AG04449 (cell line): ENCODE measurements at regions of chr14 and their contacts with region 1.

Region 1: DNA sequence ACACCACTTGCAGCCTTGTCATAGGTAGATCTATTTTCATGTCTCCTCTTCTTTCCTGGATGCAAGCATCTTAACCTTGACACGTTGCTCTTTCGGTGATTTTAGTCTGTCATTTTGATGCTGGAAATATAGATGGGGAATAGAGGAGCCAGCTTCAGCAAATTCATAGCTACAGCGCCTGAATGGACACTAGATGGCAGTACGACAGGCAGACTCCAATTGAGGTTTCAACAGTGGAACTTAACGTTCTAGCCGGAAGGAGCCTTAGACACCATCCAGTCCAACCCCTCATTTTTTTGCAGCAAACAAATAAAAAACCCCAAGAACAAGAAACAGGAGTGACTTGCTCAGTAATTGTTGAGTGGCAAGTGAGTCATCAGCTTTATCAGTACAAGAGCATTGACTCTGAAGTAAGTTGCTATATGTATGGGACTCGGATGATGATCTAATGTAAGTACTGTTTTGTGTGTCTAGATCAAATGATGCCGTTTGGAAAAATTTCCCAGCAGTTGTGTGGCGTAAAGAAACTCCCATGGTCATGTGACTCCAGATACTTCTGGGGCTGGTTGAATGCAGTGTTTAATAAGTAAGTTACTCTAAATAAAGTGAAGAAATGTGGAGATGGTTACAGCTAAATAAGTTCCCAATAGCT is 9.0 kb downstream of the DMAC2L start:
- DNase-seq: peak; percentile 82
- H3K4me3 ChIP-seq: peak overlapping the region; percentile 39
- CTCF ChIP-seq: peak; percentile 85

Region 2: DNA sequence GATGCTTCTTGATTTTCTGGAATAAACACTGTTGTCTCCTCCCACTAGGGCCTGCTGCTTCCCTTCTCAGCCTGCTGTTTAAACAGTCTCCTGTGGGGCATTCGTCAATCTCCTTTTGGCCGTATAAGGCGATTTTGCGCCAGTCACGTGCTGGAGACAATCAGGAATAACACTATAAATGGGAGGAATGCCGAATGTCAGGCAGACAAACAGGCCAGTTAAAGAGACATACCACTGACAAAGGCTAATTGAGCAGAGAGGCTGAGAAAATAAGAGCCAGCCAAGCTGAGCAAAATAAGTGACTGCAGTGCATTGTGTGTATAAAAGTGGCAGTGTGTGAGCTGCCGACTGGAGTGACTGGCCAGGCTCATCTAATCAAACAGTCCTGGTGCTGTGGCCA is 14.3 kb after region 1 on chr14:
- CTCF ChIA-PET with region 1: interaction called, 66 read pairs
- POLR2A ChIA-PET with region 1: no interaction called
- DNase-seq: no peak
- H3K4me3 ChIP-seq: no peak overlapping the region
- CTCF ChIP-seq: no peak

Region 3: DNA sequence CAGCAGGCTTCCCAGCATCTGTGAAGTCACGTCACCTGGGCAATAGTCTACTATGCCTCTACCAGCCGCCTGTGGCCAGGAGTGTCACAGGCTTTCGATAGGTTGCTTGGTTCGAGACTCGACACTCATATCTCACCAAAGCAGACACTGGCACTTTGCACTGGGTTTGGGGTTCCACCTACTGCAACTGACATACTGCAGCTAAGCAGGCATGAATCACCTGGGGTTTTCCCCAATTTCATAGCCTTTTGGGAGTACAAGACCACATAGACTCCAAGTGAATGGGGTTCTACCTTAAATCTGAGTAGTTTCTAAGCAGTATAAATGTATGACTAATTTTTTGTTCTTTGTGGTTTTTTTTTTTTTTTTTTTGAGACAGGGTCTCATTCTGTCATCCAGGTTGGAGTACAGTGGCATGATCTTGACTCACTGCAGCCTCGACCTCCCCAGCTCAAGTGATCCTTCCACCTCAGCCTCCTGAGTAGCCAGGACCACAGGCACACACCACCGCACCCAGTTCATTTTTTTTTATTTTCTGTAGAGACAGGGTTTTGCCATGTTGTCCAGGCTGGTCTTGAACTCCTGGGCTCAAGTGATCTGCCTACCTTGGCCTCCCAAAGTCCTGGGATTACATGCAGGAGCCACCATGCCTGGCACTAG is 23.1 kb after region 1 on chr14:
- CTCF ChIA-PET with region 1: interaction called, 15 read pairs
- POLR2A ChIA-PET with region 1: interaction called, 4 read pairs
- DNase-seq: no peak
- H3K4me3 ChIP-seq: no peak overlapping the region
- CTCF ChIP-seq: no peak

Region 4: GRCh38 chr14:50425816-50426215 is 104.7 kb after region 1 on chr14:
- CTCF ChIA-PET with region 1: interaction called, 10 read pairs
- POLR2A ChIA-PET with region 1: no interaction called
- DNase-seq: peak; percentile 49
- H3K4me3 ChIP-seq: no peak overlapping the region
- CTCF ChIP-seq: no peak

Region 5: GRCh38 chr14:50432131-50432530 is 111.0 kb after region 1 on chr14:
- CTCF ChIA-PET with region 1: interaction called, 10 read pairs
- POLR2A ChIA-PET with region 1: no interaction called
- DNase-seq: no peak
- H3K4me3 ChIP-seq: no peak overlapping the region
- CTCF ChIP-seq: no peak

Region 6: GRCh38 chr14:50532502-50533240 is 211.5 kb after region 1 on chr14 and contains the start of gene MAP4K5:
- CTCF ChIA-PET with region 1: interaction called, 63 read pairs
- POLR2A ChIA-PET with region 1: interaction called, 4 read pairs
- DNase-seq: peak; percentile 41
- H3K4me3 ChIP-seq: peak within 1 kb of the TSS; percentile 83
- CTCF ChIP-seq: peak; percentile 99

Region 7: GRCh38 chr14:50778721-50779483 is 457.8 kb after region 1 on chr14:
- CTCF ChIA-PET with region 1: interaction called, 10 read pairs
- POLR2A ChIA-PET with region 1: no interaction called
- DNase-seq: no peak
- H3K4me3 ChIP-seq: no peak overlapping the region
- CTCF ChIP-seq: no peak